ENCODE measurements at regions of chr5 and their contacts with region 1.

Region 1: GRCh38 chr5:156367597-156367996 is 40.6 kb downstream of the SGCD start:
- DNase-seq: peak; percentile 34 to 83
- ATAC-seq: peak; percentile 95 to 98
- H3K4me3 ChIP-seq: no peak overlapping the region
- H3K27ac ChIP-seq: peak overlapping the region; percentile 31 to 72 (median 56)
- H3K4me1 ChIP-seq: peaks cover 40 to 50% of the 10 kb centered on the region in 2 donors
- H3K27me3 ChIP-seq: no peaks in the 10 kb centered on the region
- CTCF ChIP-seq: no peak
- POLR2A ChIP-seq: no peak

Region 2: DNA sequence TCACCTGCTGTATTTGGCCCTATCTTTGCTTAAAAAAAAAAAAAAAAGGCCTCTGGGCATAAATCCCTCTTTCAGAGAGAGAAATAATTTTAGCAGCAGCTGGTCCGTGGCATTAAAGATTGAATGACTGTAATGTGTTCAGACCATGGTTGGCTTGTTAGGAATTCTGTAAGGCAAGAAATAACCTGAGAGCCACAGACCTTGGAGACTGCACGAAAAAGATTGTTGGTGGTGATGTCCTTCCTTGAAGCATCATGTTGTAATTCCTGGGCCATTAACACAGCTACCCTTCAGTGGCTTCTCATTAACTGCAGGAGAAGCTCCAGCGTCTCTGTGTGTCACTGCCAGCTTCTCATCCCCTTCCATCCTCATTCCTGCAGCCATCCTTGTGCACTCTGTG is 38.4 kb after region 1 on chr5:
- in situ Hi-C with region 1: no loop called
- intact Hi-C with region 1: loop called (anchors 1 kb)
- DNase-seq: no peak
- ATAC-seq: peak in 1 of 2 donors; percentile 28
- H3K4me3 ChIP-seq: no peak overlapping the region
- H3K27ac ChIP-seq: peak overlapping the region in 1 of 4 donors; percentile 54
- H3K4me1 ChIP-seq: peaks cover 19 to 44% of the 10 kb centered on the region in 2 donors
- H3K27me3 ChIP-seq: no peaks in the 10 kb centered on the region
- CTCF ChIP-seq: no peak
- POLR2A ChIP-seq: no peak